Ascending aorta (tissue), 2 donors: ENCODE measurements at regions of chr6 and their contacts with region 1.

Region 1: DNA sequence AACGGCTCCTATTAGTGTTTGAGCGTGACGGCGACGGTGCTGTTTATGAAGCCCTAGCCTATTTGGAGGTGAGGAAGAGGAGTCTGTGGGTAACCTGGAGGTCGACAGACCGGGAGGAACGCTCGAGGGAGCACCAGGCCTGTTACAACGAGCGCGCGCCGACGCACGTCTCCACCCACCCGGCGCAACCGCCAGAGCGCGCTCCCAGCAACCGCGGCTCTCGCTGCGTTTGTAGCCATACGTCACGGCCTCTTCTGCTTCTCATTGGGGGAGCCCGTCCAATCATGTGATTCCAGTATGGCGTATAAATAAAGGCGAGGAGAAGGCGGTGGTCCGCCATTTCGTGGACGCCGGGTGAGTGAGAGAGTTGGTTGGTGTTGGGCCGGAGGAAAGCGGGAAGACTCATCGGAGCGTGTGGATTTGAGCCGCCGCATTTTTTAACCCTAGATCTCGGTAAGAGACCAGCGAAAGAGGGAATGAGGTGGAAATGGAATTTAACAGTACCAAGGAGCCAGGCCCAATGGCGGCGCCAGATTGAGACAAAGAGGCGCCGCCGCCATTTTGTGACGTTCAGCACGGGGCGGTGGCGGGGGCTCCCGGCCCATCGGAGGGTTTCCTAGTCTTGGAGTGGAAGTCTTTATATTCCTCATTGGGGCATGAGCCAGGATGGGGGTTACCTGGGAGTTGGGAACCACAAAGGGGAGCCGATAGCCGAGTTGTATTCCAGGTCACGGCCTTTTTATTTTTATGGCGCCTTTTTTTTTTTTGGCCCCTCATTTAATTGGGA is at the start of gene SRSF3:
- DNase-seq: peak; percentile 87 to 97
- H3K4me3 ChIP-seq: peak within 1 kb of the TSS; percentile 69 to 71
- H3K27ac ChIP-seq: peak within 1 kb of the TSS; percentile 96 to 97
- H3K4me1 ChIP-seq: peaks cover 9 to 27% of the 10 kb centered on the region in 2 donors
- H3K27me3 ChIP-seq: no peaks in the 10 kb centered on the region
- CTCF ChIP-seq: peak; percentile 47 to 49 (median 48)
- total RNA-seq, gene SRSF3: 94.7 TPM

Region 2: DNA sequence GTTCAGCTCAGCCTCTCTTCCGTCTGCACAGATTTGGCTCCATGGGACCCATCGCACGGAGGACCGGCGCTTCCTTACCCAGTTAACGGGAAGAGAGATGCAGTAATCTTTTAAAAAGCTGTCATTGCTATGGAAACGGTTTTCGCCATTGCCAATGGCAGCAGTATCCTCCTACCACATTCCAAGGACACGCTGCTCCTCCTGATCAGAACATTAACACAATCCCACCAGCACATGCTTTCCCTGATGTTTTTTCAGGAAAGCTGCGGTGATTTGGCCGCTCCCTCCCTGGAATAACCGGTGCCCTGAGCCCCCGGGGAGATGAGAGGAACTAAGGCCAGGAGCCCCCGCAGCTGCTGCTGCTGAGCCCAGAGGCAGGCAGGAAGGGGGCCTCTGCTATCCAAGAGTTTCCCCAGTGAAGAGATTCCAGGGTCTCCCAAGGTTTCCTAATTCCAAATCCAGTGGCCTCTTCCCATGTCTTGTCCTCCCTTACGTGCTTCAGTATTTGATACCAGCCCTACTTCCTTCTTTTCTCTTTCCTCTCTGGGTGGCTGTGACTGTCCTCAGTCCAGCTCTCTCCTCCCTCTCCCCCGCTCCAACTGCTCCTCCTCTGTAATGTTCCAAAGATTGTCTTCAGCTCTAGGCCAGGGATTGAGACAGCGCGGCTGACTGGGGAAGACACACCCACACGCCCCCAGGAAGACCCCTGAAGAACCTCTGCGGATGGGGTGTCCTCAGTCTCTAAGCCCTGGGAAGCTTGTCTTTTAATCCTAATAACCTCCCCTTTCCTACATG is 260.1 kb before region 1 on chr6:
- intact Hi-C with region 1: no loop called
- DNase-seq: no peak
- H3K4me3 ChIP-seq: no peak overlapping the region
- H3K27ac ChIP-seq: no peak overlapping the region
- H3K4me1 ChIP-seq: no peaks in the 10 kb centered on the region
- H3K27me3 ChIP-seq: no peaks in the 10 kb centered on the region
- CTCF ChIP-seq: no peak

Region 3: DNA sequence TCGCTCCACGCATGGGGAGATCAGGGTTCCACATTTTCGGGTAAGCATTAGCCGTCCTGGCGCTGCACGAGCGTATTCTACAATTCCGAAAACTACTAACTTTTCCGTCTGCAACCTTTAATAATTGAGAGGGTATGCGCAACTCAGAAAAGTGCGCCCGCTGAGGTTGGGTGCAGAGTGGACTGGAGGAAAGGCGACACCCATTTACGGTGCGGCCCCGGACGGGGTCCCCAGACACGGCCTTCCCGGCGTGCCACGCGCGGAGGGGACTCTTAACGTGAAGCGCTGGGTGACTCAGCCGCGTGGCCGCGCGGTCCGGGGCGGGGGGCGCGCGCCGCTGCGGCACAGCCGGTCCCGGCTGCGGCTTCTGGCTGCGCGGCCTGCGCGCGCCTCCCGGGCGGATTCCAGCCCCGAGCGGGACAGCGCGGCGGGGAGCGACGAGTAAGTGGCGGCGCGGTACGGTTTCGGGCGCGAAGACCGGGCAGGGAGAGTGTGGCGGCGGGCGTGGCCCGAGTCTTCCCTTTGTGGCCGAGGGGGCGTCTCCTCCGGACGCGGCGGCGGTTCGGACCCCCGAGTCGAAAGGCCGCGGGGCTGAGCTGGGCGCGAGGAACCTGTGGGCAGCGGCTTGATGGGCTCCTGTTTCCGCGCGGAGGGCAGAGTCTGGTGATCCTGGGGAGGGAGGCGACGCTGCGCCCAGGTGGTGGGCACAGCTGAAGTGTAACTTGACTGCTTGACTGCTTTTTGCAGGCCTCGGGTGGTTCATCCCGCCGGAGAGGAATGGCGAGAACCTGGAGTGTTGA is 151.4 kb before region 1 on chr6 and contains the starts of genes KCTD20 and PXT1:
- intact Hi-C with region 1: loop called (anchors 2 kb)
- DNase-seq: peak; percentile 67 to 94
- H3K4me3 ChIP-seq: peak within 1 kb of the TSS; percentile 88 to 92
- H3K27ac ChIP-seq: peak within 1 kb of the TSS; percentile 96 to 97
- H3K4me1 ChIP-seq: peaks cover 0 to 25% of the 10 kb centered on the region in 2 donors
- H3K27me3 ChIP-seq: no peaks in the 10 kb centered on the region
- CTCF ChIP-seq: peak in 1 of 3 experiments; percentile 10
- total RNA-seq, gene KCTD20: 71.5 TPM
- total RNA-seq, gene PXT1: not detected

Region 4: DNA sequence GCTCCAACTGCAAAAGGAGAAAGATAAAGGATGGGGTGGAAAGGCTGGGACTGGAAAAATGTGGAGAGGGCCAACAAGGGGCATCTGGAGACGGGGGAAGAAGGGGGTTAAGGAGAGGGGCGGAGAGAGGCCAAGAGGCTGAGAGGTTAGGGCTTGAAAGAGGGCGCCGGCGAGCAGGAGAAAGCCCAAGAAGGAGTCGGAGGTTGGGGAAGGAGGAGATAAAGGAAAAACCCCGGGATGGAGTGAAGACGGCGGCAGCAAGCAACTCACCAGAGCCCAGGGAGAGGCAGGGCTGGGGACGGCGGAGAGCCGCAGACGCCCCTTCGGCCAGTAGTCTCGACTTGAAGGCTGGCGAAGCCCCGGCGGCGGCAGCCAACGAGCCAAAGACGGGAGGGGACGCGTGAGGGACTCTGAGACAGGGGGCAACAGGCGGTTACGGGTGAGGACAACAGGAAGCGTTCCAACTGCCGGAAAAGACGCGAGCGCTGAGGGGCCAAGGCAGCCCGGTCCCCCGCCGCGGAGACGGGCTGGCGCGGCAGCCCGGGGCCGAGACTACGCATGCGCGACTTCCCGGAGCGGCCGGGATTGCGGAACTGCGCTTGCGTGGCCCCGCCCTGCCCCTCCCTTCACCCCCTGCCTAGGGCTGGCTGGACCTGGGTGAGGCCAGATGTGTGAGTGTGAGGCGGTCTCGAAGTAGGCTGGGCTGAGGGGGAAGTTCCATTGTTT is 47.1 kb before region 1 on chr6 and contains the start of gene STK38:
- intact Hi-C with region 1: loop called (anchors 1 kb)
- DNase-seq: peak; percentile 65 to 94
- H3K4me3 ChIP-seq: peak within 1 kb of the TSS; percentile 69 to 98
- H3K27ac ChIP-seq: peak within 1 kb of the TSS; percentile 89 to 97
- H3K4me1 ChIP-seq: peaks cover 0 to 16% of the 10 kb centered on the region in 2 donors
- H3K27me3 ChIP-seq: no peaks in the 10 kb centered on the region
- CTCF ChIP-seq: no peak
- total RNA-seq, gene STK38: 10.5 TPM